Aorta (tissue), 5 donors: ENCODE measurements at regions of chr15 and their contacts with region 1.

Region 1: DNA sequence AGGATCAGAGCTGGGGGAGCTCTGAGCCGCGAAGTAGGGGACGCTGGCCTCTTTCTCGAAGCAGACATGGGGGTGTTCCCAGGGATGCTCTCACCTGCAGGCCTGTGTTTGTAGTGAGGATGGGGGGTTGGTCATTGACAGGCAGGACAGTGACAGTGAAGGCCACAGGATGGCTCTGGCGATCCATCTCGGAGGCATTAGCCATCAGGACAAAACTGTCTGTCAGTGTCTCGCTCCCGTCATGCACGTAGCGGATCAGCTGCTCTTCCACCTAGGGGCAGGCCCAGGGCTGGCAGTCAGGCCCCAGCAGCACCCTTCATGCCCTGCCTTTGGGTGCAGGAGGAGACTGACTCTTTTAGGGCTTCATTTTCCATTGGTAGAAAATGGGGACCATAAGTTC is 28.0 kb downstream of the CSPG4 start:
- DNase-seq: no peak
- ATAC-seq: no peak
- H3K4me3 ChIP-seq: no peak overlapping the region
- H3K27ac ChIP-seq: no peak overlapping the region
- H3K4me1 ChIP-seq: no peaks in the 10 kb centered on the region
- H3K27me3 ChIP-seq: no peaks in the 10 kb centered on the region

Region 2: DNA sequence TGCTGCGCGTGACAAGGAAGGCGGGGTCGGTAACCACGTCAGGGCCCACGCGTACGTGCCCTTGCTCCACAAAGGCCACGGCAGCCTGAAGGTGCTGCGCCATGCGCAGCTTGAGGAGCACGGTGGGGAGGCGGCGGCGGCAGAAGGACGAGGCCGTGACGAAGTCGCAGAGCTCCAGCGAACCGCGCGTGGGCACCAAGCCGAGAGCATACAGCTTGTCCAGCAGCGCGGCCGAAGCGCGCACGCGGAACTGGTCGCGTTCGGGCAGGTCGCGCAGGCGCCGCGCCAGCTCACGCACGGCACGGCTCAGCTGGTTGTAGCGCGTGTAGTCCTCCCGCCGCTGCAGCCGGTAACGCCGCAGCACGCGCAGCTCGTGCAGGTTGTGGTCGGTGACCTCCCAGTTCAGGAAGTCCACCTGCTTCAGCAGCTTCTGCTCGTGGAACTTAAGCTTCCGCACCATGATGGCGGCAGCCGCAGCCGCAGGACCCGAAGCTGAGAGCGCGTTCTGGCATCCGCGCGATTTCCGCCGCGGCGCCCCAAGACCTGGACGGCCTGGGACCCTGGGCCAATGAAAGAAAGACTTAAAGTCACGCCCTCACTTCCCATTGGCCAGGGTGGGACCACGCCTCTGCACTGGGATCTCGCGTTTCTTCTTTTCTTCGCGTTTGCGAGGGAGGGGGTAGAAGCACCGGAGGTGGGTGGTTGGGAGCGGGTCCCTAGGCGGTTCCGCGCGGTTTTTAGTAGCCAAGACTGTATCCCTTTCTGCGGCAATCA is 44.7 kb before region 1 on chr15 and contains the start of gene IMP3:
- intact Hi-C with region 1: loop called in 1 of 2 experiments (anchors 5 kb)
- DNase-seq: peak; percentile 97
- ATAC-seq: peak; percentile 97
- H3K4me3 ChIP-seq: peak within 1 kb of the TSS; percentile 43 to 46
- H3K27ac ChIP-seq: peak within 1 kb of the TSS; percentile 45 to 76
- H3K4me1 ChIP-seq: peaks cover 0 to 13% of the 10 kb centered on the region in 2 donors
- H3K27me3 ChIP-seq: no peaks in the 10 kb centered on the region
- total RNA-seq, gene IMP3: 35.2 to 46.1 TPM

Region 3: DNA sequence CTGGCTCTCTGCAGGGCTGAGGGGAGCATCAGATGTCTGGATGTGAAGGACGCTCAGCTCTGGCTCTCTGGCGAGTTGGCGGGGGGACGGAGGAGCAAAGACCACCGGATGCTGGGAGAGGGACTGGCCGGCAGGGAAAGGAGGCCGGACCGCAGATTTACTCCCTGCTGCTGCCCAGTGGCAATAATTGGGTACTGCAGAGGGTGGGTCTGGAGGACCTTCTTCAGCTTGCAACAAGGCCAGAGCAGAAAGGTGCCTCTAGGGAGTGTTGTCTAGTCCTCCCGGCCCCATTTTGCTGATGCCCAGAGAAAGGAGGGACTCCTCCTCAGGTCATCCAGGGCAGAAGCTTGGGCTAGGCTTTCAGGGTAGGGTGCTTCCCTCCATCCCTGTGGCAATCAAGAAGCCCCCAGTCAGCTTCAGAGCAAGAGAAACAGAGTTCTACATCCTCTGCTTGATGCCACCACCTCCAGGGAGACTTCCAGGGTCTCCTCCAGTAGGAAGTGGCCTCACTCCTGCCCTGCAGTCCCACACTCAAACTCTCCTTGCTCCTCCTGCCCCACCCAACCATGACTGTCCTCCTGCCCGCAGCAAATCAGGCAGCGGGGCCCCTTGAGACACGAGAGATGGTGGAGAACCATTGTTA is 48.3 kb after region 1 on chr15:
- intact Hi-C with region 1: loop called (anchors 2 to 5 kb)
- DNase-seq: peak; percentile 74 to 87
- ATAC-seq: peak; percentile 84
- H3K4me3 ChIP-seq: no peak overlapping the region
- H3K27ac ChIP-seq: no peak overlapping the region
- H3K4me1 ChIP-seq: no peaks in the 10 kb centered on the region
- H3K27me3 ChIP-seq: no peaks in the 10 kb centered on the region

Region 4: GRCh38 chr15:75801859-75802593 is 117.4 kb after region 1 on chr15:
- intact Hi-C with region 1: loop called (anchors 2 to 5 kb)
- DNase-seq: peak; percentile 85 to 93
- ATAC-seq: peak; percentile 98
- H3K4me3 ChIP-seq: no peak overlapping the region
- H3K27ac ChIP-seq: no peak overlapping the region
- H3K4me1 ChIP-seq: no peaks in the 10 kb centered on the region
- H3K27me3 ChIP-seq: no peaks in the 10 kb centered on the region